OCI-LY7 (cell line): ENCODE measurements at regions of chr12 and their contacts with region 1.

Region 1: DNA sequence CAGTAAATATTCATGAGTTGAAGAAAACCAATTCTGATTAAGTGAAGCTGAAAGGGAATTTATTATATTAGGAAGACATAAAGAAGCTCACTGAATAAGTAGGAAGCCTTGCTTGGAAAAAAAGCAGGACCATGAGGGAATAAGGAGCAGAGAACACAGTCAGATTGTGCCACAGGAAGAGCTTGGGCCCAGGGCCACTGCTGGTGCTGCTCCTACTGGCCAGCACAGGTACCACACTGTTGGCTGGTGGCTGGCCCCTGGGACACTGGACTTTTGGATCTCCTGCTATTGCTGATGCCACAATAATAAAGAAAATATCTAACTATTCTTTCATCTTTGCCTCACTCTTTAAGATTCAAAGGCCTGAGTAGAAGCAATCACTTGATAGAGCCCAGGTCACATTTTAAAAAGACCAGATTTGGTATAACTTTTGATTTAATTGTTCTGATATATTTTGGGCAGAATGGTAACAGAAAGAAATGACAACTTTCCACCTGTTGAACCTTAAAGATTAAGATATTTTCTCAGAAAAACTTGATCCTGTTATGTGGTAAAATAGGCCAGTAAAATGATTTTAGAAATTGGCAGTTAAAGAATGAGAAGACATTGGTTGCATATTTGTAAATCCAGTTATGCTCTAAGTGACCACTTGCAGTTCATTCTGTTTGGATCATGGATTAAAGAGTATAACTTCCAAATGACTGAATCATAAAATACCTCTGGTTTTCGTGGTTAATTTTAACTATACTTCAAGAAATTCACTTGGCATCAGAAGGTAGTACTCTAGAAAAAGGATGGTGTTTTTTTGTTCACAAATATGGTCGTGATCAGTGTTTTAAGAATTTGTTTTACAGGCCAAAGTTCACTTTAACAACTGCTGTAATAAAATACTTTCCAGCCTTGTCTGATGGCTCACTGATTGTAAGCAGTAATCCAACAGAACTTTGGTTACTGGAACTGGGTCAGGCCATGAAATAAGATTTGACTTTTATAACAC is 68.3 kb downstream of the DERA start:
- DNase-seq: no peak
- H3K4me3 ChIP-seq: no peak overlapping the region
- H3K27ac ChIP-seq: no peak overlapping the region
- H3K4me1 ChIP-seq: peaks cover 27% of the 10 kb centered on the region
- CTCF ChIP-seq: peak; percentile 67

Region 2: GRCh38 chr12:15963271-15963670 is 16.1 kb before region 1 on chr12:
- CTCF ChIA-PET with region 1: no interaction called
- POLR2A ChIA-PET with region 1: no interaction called
- intact Hi-C with region 1: no loop called
- DNase-seq: no peak
- H3K4me3 ChIP-seq: no peak overlapping the region
- H3K27ac ChIP-seq: no peak overlapping the region
- H3K4me1 ChIP-seq: no peaks in the 10 kb centered on the region
- CTCF ChIP-seq: no peak

Region 3: GRCh38 chr12:16076553-16076952 is 97.2 kb after region 1 on chr12:
- CTCF ChIA-PET with region 1: no interaction called
- POLR2A ChIA-PET with region 1: no interaction called
- intact Hi-C with region 1: no loop called
- DNase-seq: peak; percentile 55
- H3K4me3 ChIP-seq: no peak overlapping the region
- H3K27ac ChIP-seq: no peak overlapping the region
- H3K4me1 ChIP-seq: no peaks in the 10 kb centered on the region
- CTCF ChIP-seq: peak; percentile 71

Region 4: DNA sequence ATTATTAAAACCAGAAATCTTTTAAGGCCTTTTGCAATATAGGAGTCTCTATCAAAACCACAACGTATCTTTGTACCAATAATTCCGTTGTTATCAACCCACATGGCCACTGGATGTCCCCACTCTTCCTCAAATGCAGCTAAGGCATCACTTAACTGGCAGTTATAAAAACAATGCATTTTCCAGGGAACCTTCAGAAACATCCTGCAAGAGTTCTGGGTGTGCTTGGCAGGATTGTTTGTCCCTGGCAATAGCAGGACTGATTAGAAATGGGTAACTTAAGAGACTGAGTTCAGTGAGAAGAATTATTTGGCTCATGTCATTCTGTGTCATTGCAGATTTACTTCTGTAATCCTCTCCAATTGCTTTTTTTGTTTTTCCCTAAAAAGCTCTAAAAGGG is 186.1 kb after region 1 on chr12:
- CTCF ChIA-PET with region 1: no interaction called
- POLR2A ChIA-PET with region 1: no interaction called
- intact Hi-C with region 1: loop called (anchors 2 kb)
- DNase-seq: peak; percentile 72
- H3K4me3 ChIP-seq: no peak overlapping the region
- H3K27ac ChIP-seq: no peak overlapping the region
- H3K4me1 ChIP-seq: peaks cover 17% of the 10 kb centered on the region
- CTCF ChIP-seq: peak; percentile 91

Region 5: GRCh38 chr12:16634786-16635185 is 655.4 kb after region 1 on chr12:
- CTCF ChIA-PET with region 1: no interaction called
- POLR2A ChIA-PET with region 1: no interaction called
- intact Hi-C with region 1: no loop called
- DNase-seq: no peak
- H3K4me3 ChIP-seq: no peak overlapping the region
- H3K27ac ChIP-seq: peak overlapping the region; percentile 39
- H3K4me1 ChIP-seq: peaks cover 36% of the 10 kb centered on the region
- CTCF ChIP-seq: no peak